SK-N-SH (cell line): ENCODE measurements at regions of chr12 and their contacts with region 1.

Region 1: DNA sequence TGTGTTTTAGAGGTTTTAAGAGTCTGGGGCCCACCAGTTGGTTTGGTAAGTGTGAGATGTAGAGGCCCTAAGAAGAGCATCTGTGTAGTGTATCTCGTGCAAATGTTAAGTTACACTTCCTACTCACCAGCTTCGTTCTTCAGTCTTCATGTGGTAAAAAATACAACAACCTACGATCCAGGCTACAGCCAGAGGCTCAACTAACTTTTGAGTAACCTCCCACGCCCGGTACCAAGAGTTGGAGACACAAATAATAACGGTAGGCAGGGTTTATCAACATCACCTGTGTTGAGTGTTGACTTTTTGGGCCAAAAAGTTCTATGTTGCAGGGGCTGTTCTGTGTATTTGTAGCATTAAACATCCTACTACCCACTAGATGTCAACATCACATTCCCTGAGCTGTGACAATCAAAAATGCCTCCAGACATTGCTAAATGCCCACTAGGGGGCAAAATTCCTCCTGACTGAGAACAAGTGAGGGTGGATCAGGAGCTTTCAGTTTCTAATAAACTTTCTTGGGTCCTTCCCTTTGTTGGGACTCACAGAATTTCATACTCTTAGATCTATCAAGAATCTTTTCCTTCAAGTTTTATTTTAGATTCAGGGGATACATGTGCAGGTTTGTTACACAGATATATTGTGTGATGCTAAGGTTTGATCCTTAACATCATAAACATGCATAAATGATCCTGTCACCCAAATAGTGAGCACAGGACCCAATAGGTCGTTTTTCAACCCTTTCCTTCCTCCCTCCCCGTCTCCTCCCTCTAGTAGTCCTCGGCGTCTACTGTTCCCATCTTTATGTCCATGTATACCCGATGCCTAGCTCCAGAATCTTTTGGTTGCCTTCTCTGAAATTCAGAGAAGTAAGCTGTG is 94.7 kb downstream of the SLC2A13 start:
- DNase-seq: peak; percentile 40
- H3K4me3 ChIP-seq: peak overlapping the region in 1 of 2 experiments; percentile 14; a peak in 2 of 4 replicates
- H3K27ac ChIP-seq: no peak overlapping the region
- H3K4me1 ChIP-seq: peaks cover 0 to 5% of the 10 kb centered on the region in 2 experiments; a peak in 1 of 4 replicates
- H3K27me3 ChIP-seq: no peaks in the 10 kb centered on the region
- CTCF ChIP-seq: peak; percentile 74
- EP300 ChIP-seq: no peak
- RAD21 ChIP-seq: peak; percentile 68

Region 2: DNA sequence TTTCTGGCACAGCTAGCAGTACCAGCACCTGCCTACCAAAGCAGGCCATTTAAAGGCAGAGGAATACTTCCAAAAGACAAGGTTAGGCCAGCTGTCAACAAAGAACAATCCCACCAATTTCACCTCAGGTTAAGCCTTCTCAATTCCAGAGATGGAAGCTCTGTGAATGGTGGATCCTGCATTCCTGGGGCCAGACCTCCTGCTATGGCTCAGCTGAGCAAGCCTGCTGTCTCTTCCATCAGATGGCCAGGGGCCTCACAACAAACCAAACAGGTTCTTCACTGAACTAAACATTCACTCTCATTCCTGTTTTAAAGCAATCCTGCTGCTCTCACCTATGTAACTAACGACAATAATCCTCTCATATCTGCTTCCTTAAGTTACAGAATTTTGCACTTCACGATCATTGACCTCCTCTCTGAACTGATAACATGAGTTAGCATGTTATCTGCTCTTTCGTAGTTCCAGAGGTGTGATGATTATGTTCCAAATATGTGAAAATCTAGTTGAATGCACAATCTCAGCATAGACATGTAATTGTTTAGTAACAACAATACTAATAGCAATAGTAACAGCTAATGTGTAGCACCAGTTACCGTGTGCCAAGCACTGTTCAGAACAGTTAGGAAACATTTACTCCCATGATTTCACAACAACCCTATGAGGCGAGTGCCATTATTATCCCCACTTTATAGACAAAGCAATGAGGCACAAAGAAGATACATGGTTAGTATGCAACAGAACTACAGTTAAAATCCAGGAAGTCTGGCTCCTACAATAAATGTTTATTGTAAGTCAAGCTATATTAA is 21.5 kb after region 1 on chr12:
- CTCF ChIA-PET with region 1: interaction called, 10 read pairs
- POLR2A ChIA-PET with region 1: no interaction called
- DNase-seq: no peak
- H3K4me3 ChIP-seq: no peak overlapping the region
- H3K27ac ChIP-seq: no peak overlapping the region
- H3K4me1 ChIP-seq: no peaks in the 10 kb centered on the region; a peak in 1 of 4 replicates
- H3K27me3 ChIP-seq: no peaks in the 10 kb centered on the region
- CTCF ChIP-seq: no peak
- EP300 ChIP-seq: no peak
- RAD21 ChIP-seq: no peak